Activated CD4-positive, alpha-beta T cell treated with anti-CD3 and anti-CD28 coated beads for 36 hours (primary cell): ENCODE measurements at regions of chr5 and their contacts with region 1.

Region 1: GRCh38 chr5:32232441-32233219 is 58.5 kb upstream of the GOLPH3 start:
- DNase-seq: peak; percentile 90
- ATAC-seq: peak; percentile 95
- H3K4me3 Mint-ChIP-seq: no peak overlapping the region
- H3K27ac Mint-ChIP-seq: peak overlapping the region; percentile 56
- H3K4me1 Mint-ChIP-seq: no peaks in the 10 kb centered on the region
- H3K27me3 Mint-ChIP-seq: no peaks in the 10 kb centered on the region

Region 2: GRCh38 chr5:32217886-32218396 is 14.7 kb before region 1 on chr5:
- CTCF ChIA-PET with region 1: interaction called, 18 read pairs
- POLR2A ChIA-PET with region 1: no interaction called
- intact Hi-C with region 1: no loop called
- DNase-seq: no peak
- ATAC-seq: no peak
- H3K4me3 Mint-ChIP-seq: no peak overlapping the region
- H3K27ac Mint-ChIP-seq: no peak overlapping the region
- H3K4me1 Mint-ChIP-seq: no peaks in the 10 kb centered on the region
- H3K27me3 Mint-ChIP-seq: no peaks in the 10 kb centered on the region

Region 3: GRCh38 chr5:32276173-32276853 is 43.7 kb after region 1 on chr5:
- CTCF ChIA-PET with region 1: interaction called, 13 read pairs
- POLR2A ChIA-PET with region 1: no interaction called
- intact Hi-C with region 1: no loop called
- DNase-seq: no peak
- ATAC-seq: no peak
- H3K4me3 Mint-ChIP-seq: no peak overlapping the region
- H3K27ac Mint-ChIP-seq: peak overlapping the region; percentile 76
- H3K4me1 Mint-ChIP-seq: peaks cover 53% of the 10 kb centered on the region
- H3K27me3 Mint-ChIP-seq: no peaks in the 10 kb centered on the region

Region 4: GRCh38 chr5:32329308-32329834 is 96.7 kb after region 1 on chr5:
- CTCF ChIA-PET with region 1: interaction called, 166 read pairs
- POLR2A ChIA-PET with region 1: interaction called, 3 read pairs
- intact Hi-C with region 1: loop called (anchors 1 kb)
- DNase-seq: peak; percentile 75
- ATAC-seq: peak; percentile 97
- H3K4me3 Mint-ChIP-seq: no peak overlapping the region
- H3K27ac Mint-ChIP-seq: no peak overlapping the region
- H3K4me1 Mint-ChIP-seq: no peaks in the 10 kb centered on the region
- H3K27me3 Mint-ChIP-seq: no peaks in the 10 kb centered on the region

Region 5: GRCh38 chr5:32413466-32414263 is 181.0 kb after region 1 on chr5:
- CTCF ChIA-PET with region 1: no interaction called
- POLR2A ChIA-PET with region 1: no interaction called
- intact Hi-C with region 1: no loop called
- DNase-seq: no peak
- ATAC-seq: no peak
- H3K4me3 Mint-ChIP-seq: no peak overlapping the region
- H3K27ac Mint-ChIP-seq: no peak overlapping the region
- H3K4me1 Mint-ChIP-seq: peaks cover 2% of the 10 kb centered on the region
- H3K27me3 Mint-ChIP-seq: no peaks in the 10 kb centered on the region

Region 6: GRCh38 chr5:32613050-32613672 is 380.5 kb after region 1 on chr5:
- CTCF ChIA-PET with region 1: interaction called, 11 read pairs
- POLR2A ChIA-PET with region 1: no interaction called
- intact Hi-C with region 1: loop called (anchors 1 to 2 kb)
- DNase-seq: peak; percentile 91
- ATAC-seq: peak; percentile 93
- H3K4me3 Mint-ChIP-seq: no peak overlapping the region
- H3K27ac Mint-ChIP-seq: peak overlapping the region; percentile 67
- H3K4me1 Mint-ChIP-seq: peaks cover 4% of the 10 kb centered on the region
- H3K27me3 Mint-ChIP-seq: no peaks in the 10 kb centered on the region